Common myeloid progenitor, CD34-positive (primary cell): ENCODE measurements at regions of chr11 and their contacts with region 1.

Region 1: DNA sequence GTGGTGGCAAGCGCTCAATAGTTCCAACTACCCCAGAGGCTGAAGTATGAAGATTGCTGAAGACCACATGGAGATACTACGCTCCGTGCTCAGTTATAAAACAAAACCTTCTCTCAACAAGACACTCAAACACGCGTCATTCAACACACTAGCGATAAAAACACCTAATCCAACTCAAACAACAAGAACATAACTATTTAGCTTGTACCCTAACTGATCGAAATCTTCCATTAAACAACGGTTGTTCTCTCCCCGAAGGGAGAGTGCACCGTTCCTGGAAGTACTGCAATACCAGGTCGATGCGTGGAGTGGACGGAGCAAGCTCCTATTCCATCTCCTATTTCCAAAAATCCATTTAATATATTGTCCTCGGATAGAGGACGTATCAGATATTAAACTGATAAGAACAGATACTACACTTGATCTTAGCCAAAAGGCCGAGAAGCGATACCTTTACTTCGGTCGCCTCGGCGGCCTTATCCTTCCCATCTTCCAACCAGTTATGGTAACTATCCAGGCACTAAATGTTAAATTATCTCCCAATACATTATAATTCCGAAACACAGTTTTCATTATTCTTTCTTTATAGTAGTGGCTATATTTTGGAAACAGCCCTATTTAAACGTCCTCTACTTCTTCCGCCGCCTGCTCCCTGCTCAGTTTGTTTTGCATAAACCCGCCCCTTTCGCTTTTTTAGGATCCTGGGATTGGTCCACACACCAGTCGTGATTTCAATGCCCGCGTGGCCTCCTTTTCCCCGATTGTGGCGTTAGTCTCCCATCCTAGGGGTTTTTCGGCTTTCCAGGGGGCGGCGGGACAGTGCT is 2.2 kb upstream of the WDR74 start:
- DNase-seq: peak; percentile 93 to 98 (median 98)
- H3K4me3 ChIP-seq: peak overlapping the region; percentile 44 to 99 (median 64)
- H3K27ac ChIP-seq: peak overlapping the region; percentile 98 to 99
- H3K4me1 ChIP-seq: peaks cover 8 to 37% (median 25%) of the 10 kb centered on the region in 4 experiments
- H3K27me3 ChIP-seq: no peaks in the 10 kb centered on the region

Region 2: DNA sequence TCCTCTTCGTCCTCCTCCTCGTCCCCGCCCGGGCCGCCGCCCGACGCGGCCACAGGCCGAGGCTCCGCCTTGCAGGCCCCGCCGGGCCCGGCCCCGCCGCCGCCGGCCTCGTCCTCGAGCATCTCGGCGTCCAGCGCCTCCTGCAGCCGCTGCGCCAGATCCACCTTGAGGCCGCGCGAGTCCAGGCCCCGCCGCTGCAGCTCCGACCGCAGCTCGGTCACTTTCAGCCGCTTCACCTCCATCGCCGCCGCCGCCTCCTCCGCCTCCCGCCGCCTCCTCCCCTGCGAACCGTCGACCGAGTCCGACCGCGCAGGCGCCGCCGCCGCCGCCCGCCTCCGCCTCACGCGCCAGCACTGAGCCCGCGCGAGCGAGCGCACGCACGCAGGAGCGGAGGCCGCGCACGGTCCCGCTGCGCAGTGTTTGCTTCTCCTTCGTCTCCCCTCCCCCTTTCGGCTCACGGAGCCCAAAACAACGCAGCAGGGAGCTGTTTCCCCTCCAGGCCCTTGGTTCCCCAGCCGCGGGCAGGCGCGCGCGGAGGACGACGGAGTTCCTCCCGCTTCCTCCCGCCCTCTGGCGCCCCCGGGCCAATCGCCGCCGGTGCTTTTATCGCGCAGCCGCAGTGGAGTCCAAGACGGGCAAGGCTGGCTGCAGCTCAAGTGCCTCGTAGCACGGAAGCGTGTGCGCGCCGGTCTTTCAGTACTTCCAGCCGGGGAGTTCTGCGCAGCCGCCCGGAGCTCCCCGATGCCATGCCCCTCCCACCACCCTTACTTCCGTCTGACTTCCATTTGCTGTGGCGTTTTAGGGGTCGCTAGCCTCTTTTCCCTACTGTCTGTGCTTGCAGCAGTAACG is 114.4 kb before region 1 on chr11 and contains the start of gene HNRNPUL2:
- CTCF ChIA-PET with region 1: interaction called, 3 read pairs
- POLR2A ChIA-PET with region 1: interaction called, 21 read pairs
- DNase-seq: peak; percentile 100
- H3K4me3 ChIP-seq: peak within 1 kb of the TSS; percentile 83 to 100 (median 89)
- H3K27ac ChIP-seq: peak within 1 kb of the TSS; percentile 84 to 95
- H3K4me1 ChIP-seq: peaks cover 23 to 47% (median 41%) of the 10 kb centered on the region in 4 experiments
- H3K27me3 ChIP-seq: no peaks in the 10 kb centered on the region

Region 3: GRCh38 chr11:62787005-62787759 is 54.4 kb before region 1 on chr11 and contains the start of gene TMEM179B:
- CTCF ChIA-PET with region 1: interaction called, 3 read pairs
- POLR2A ChIA-PET with region 1: interaction called, 65 read pairs
- DNase-seq: peak; percentile 98 to 99 (median 99)
- H3K4me3 ChIP-seq: peak within 1 kb of the TSS; percentile 75 to 100 (median 97)
- H3K27ac ChIP-seq: peak within 1 kb of the TSS; percentile 72 to 88
- H3K4me1 ChIP-seq: peaks cover 10 to 48% (median 40%) of the 10 kb centered on the region in 4 experiments
- H3K27me3 ChIP-seq: no peaks in the 10 kb centered on the region

Region 4: GRCh38 chr11:62855571-62856332 is 14.2 kb after region 1 on chr11:
- CTCF ChIA-PET with region 1: interaction called, 6 read pairs
- POLR2A ChIA-PET with region 1: interaction called, 121 read pairs
- DNase-seq: peak; percentile 98 to 99 (median 98)
- H3K4me3 ChIP-seq: peak overlapping the region; percentile 79 to 100 (median 97)
- H3K27ac ChIP-seq: peak overlapping the region; percentile 55 to 91
- H3K4me1 ChIP-seq: peaks cover 25 to 54% (median 38%) of the 10 kb centered on the region in 4 experiments
- H3K27me3 ChIP-seq: no peaks in the 10 kb centered on the region

Region 5: DNA sequence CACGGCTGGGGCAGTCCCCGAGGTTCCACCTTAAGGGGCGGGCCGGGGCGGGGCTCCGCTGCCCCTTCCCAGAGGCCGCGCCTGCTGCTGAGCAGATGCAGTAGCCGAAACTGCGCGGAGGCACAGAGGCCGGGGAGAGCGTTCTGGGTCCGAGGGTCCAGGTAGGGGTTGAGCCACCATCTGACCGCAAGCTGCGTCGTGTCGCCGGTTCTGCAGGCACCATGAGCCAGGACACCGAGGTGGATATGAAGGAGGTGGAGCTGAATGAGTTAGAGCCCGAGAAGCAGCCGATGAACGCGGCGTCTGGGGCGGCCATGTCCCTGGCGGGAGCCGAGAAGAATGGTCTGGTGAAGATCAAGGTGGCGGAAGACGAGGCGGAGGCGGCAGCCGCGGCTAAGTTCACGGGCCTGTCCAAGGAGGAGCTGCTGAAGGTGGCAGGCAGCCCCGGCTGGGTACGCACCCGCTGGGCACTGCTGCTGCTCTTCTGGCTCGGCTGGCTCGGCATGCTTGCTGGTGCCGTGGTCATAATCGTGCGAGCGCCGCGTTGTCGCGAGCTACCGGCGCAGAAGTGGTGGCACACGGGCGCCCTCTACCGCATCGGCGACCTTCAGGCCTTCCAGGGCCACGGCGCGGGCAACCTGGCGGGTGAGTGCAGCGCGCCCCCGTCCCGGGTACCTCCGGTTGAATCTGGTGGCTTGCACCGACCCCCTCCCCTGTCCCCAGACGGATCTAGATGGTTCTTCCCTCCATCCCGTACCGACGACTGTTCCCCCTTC is 39.4 kb after region 1 on chr11 and contains the start of gene SLC3A2:
- CTCF ChIA-PET with region 1: interaction called, 3 read pairs
- POLR2A ChIA-PET with region 1: interaction called, 37 read pairs
- DNase-seq: peak; percentile 87 to 94 (median 90)
- H3K4me3 ChIP-seq: peak within 1 kb of the TSS; percentile 86 to 100 (median 95)
- H3K27ac ChIP-seq: peak within 1 kb of the TSS; percentile 98 to 99
- H3K4me1 ChIP-seq: peaks cover 15 to 48% (median 32%) of the 10 kb centered on the region in 4 experiments
- H3K27me3 ChIP-seq: no peaks in the 10 kb centered on the region

Region 6: GRCh38 chr11:64458997-64459396 is 1617.4 kb after region 1 on chr11:
- CTCF ChIA-PET with region 1: no interaction called
- POLR2A ChIA-PET with region 1: no interaction called
- DNase-seq: no peak
- H3K4me3 ChIP-seq: no peak overlapping the region
- H3K27ac ChIP-seq: no peak overlapping the region
- H3K4me1 ChIP-seq: no peaks in the 10 kb centered on the region
- H3K27me3 ChIP-seq: no peaks in the 10 kb centered on the region